Heart right ventricle (tissue), 16 donors: ENCODE measurements at regions of chr7 and their contacts with region 1.

Region 1: GRCh38 chr7:16420649-16421332 is 547 bp downstream of the CRPPA start:
- DNase-seq: peak; percentile 88 to 90
- ATAC-seq: peak; percentile 90 to 97 (median 96)
- H3K4me3 ChIP-seq: peak overlapping the region; percentile 51 to 82 (median 73)
- H3K27ac ChIP-seq: peak overlapping the region; percentile 96 to 99 (median 98)
- H3K4me1 ChIP-seq: peaks cover 0 to 31% (median 17%) of the 10 kb centered on the region in 9 donors
- H3K27me3 ChIP-seq: no peaks in the 10 kb centered on the region
- CTCF ChIP-seq: peak in 6 of 9 donors; percentile 9 to 46 (median 36)

Region 2: GRCh38 chr7:15972862-15973275 is 447.9 kb before region 1 on chr7:
- intact Hi-C with region 1: no loop called
- DNase-seq: peak in 1 of 2 donors; percentile 29
- ATAC-seq: peak in 1 of 8 donors; percentile 45
- H3K4me3 ChIP-seq: no peak overlapping the region
- H3K27ac ChIP-seq: peak overlapping the region in 3 of 10 donors; percentile 3 to 24 (median 3)
- H3K4me1 ChIP-seq: peaks cover 0 to 14% (median 7%) of the 10 kb centered on the region in 9 donors
- H3K27me3 ChIP-seq: no peaks in the 10 kb centered on the region
- CTCF ChIP-seq: no peak

Region 3: DNA sequence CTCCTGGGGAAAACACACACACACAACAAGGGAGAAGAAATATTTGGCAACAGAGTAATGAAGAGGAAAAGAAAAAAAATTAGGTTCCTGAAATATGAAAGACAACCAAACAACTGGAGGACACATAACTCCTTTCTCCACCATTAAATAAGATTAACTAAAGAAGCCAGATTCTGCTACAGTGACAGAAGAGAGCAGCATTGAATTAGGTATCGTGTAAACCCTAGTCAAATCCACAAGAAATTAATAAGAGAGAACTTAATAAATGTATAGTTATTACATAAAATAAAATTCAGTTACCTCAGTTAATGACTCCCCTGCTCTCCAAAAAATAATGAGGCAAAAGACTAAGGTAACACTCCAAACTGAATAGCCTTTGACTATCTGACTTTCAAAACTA is 306.2 kb before region 1 on chr7:
- intact Hi-C with region 1: loop called in 4 of 10 experiments (anchors 5 to 10 kb)
- DNase-seq: no peak
- ATAC-seq: no peak
- H3K4me3 ChIP-seq: no peak overlapping the region
- H3K27ac ChIP-seq: no peak overlapping the region
- H3K4me1 ChIP-seq: no peaks in the 10 kb centered on the region
- H3K27me3 ChIP-seq: no peaks in the 10 kb centered on the region
- CTCF ChIP-seq: peak in 8 of 9 donors; percentile 20 to 63 (median 49)

Region 4: DNA sequence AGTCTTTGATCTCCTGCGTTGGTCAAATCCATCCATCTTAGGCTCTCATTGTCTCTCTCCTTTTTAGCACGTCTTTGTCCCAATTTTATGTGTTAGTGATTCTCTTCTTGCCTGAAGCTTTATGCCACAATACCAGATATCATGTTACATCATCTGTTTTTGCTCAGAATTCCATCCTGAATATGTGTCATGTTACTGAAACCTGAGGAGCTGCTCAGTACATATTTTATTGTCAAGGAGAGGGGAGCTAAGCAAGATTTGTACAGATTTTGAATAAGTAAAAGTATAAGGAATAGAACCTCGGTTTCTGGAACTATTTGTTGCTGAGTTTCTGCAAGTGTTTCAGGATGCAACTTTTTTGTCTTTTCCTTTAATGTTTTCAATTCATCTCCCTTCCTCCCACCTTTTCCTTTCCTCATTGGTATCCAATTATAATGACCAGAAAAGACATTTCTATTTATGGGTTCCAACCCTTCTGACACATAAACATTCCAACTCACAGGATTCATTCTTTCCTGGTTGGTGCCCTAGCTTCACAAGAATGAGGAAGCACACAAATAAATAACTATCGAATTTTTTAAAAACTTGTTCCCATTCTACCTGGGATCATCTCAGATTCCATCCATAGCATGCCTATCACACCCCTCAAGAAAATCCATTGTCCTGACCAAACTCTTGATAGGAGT is 291.2 kb before region 1 on chr7:
- intact Hi-C with region 1: loop called in 2 of 10 experiments (anchors 10 kb)
- DNase-seq: no peak
- ATAC-seq: peak in 2 of 8 donors; percentile 35 to 44
- H3K4me3 ChIP-seq: no peak overlapping the region
- H3K27ac ChIP-seq: peak overlapping the region in 8 of 10 donors; percentile 2 to 72 (median 42)
- H3K4me1 ChIP-seq: peaks cover 0 to 31% (median 16%) of the 10 kb centered on the region in 9 donors
- H3K27me3 ChIP-seq: no peaks in the 10 kb centered on the region
- CTCF ChIP-seq: no peak

Region 5: GRCh38 chr7:16559497-16560179 is 138.8 kb after region 1 on chr7:
- intact Hi-C with region 1: loop called in 1 of 10 experiments (anchors 5 kb)
- DNase-seq: no peak
- ATAC-seq: peak in 1 of 8 donors; percentile 73
- H3K4me3 ChIP-seq: no peak overlapping the region
- H3K27ac ChIP-seq: no peak overlapping the region
- H3K4me1 ChIP-seq: peaks cover 0 to 5% (median 0%) of the 10 kb centered on the region in 9 donors
- H3K27me3 ChIP-seq: no peaks in the 10 kb centered on the region
- CTCF ChIP-seq: no peak